B cell (primary cell): ENCODE measurements at regions of chr10 and their contacts with region 1.

Region 1: DNA sequence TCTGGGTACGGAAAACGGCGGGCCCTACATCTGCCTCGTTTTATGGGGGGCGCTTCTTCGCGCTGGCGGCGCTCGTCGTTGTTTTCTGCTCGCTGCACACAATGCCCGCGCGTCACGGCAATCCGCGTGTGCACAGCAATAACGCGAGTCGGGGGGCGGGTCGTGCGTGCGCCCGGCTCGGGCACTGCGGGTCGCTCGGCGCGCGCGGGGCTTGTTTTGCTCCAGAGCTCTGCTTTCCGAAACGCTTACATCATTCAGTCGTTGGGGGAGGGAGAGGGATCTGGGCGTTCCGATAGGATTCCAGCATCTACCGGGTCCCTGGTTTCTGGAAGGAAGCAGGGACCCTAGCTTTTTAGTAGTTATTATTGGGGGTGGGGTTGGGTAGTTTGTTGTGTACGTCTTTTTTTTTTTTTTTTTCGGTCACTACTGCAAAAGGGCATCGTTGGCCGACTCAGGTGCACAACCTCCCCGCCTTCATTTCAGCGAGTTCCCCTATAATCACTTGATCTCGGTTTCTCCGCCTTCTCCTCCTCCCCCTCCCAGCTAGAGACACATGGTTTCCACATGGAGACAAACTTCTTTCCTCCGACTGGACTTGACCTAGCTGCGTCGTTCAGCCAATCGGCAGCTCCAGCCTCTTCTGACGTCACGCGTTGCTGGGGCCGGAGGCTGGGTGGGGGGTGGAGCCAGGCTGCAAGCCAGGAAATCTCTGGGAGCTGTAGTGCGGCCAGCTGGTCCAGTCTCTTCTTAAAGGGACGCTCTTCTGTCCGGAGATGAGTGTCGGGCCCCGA is 3.5 kb downstream of the MXI1 start:
- DNase-seq: peak; percentile 94
- ATAC-seq: peak; percentile 68
- H3K4me3 ChIP-seq: peak overlapping the region; percentile 67 to 90 (median 82)
- H3K4me3 Mint-ChIP-seq: peak overlapping the region; percentile 88
- H3K27ac ChIP-seq: peak overlapping the region; percentile 82 to 85
- H3K27ac Mint-ChIP-seq: peak overlapping the region; percentile 97
- H3K4me1 ChIP-seq: peaks cover 44 to 67% of the 10 kb centered on the region in 2 donors
- H3K4me1 Mint-ChIP-seq: peaks cover 58% of the 10 kb centered on the region
- H3K27me3 ChIP-seq: peaks cover 0 to 18% (median 7%) of the 10 kb centered on the region in 4 experiments
- H3K27me3 Mint-ChIP-seq: peaks cover 4% of the 10 kb centered on the region
- CTCF ChIP-seq: no peak

Region 2: DNA sequence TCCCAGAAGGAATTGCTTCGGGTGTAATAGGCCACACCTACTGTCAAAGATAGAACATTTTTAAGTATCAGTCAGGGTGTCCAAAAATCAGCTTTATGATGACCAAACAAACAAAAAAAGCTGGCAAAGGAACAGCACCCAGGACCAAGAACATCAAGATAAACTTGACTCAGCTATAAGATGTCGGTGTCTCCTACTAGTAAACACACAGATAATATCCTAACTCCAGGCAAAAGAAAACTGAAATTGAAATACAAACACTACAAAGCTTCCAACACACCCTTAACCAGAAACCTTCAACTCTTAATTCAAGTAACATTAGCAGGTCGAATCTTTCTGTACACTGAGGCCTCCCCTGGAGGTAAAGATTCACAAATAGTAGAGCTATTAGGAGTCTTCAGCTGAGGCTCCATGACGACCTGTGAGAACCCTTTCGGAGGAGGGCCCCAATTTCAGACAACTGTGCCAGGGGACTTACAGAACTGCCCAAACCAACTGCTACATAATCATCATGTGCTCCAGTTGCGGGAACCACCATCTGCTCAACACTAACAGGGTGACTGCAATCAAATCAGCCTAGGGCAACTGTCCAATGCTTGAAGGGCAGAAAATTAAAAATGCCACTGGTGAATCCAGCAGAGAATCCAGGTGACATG is 307.8 kb before region 1 on chr10:
- CTCF ChIA-PET with region 1: no interaction called
- POLR2A ChIA-PET with region 1: no interaction called
- intact Hi-C with region 1: no loop called
- DNase-seq: no peak
- ATAC-seq: no peak
- H3K4me3 ChIP-seq: no peak overlapping the region
- H3K4me3 Mint-ChIP-seq: peak overlapping the region; percentile 6
- H3K27ac ChIP-seq: no peak overlapping the region
- H3K27ac Mint-ChIP-seq: no peak overlapping the region
- H3K4me1 ChIP-seq: peaks cover 4% of the 10 kb centered on the region in 2 donors
- H3K4me1 Mint-ChIP-seq: peaks cover 20% of the 10 kb centered on the region
- H3K27me3 ChIP-seq: no peaks in the 10 kb centered on the region
- H3K27me3 Mint-ChIP-seq: no peaks in the 10 kb centered on the region
- CTCF ChIP-seq: no peak

Region 3: DNA sequence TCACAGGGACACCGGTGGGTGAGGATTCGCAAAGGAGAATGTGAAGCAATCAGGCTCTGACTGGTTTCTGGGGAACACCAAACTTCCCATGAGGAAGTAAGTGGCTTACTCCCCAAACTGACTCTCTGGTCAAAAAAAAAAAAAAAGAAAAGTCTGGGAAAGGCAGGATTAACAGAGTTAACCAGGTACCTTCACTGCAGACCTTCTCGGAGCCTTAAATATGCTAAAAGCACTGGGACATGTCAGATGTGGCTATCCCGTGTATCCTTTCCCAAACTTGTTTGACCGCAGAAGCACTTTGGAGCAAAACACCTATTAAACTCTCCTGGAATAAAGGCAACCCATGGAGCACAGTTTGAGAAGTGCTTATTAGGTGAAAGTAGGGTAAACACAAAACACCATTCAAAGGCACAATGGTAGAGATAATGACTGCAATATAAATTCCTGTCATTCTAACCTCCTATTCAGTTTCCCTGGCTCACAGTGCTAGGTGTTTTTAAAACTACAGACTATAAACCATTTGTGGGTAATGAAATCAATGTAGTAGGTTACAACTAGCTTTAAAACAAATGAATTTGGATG is 47.6 kb before region 1 on chr10:
- CTCF ChIA-PET with region 1: interaction called, 4 read pairs
- POLR2A ChIA-PET with region 1: interaction called, 3 read pairs
- intact Hi-C with region 1: loop called (anchors 5 kb)
- DNase-seq: no peak
- ATAC-seq: no peak
- H3K4me3 ChIP-seq: no peak overlapping the region
- H3K4me3 Mint-ChIP-seq: no peak overlapping the region
- H3K27ac ChIP-seq: no peak overlapping the region
- H3K27ac Mint-ChIP-seq: no peak overlapping the region
- H3K4me1 ChIP-seq: peaks cover 5 to 14% of the 10 kb centered on the region in 2 donors
- H3K4me1 Mint-ChIP-seq: peaks cover 11% of the 10 kb centered on the region
- H3K27me3 ChIP-seq: peaks cover 1 to 59% (median 25%) of the 10 kb centered on the region in 4 experiments
- H3K27me3 Mint-ChIP-seq: peaks cover 41% of the 10 kb centered on the region
- CTCF ChIP-seq: no peak

Region 4: DNA sequence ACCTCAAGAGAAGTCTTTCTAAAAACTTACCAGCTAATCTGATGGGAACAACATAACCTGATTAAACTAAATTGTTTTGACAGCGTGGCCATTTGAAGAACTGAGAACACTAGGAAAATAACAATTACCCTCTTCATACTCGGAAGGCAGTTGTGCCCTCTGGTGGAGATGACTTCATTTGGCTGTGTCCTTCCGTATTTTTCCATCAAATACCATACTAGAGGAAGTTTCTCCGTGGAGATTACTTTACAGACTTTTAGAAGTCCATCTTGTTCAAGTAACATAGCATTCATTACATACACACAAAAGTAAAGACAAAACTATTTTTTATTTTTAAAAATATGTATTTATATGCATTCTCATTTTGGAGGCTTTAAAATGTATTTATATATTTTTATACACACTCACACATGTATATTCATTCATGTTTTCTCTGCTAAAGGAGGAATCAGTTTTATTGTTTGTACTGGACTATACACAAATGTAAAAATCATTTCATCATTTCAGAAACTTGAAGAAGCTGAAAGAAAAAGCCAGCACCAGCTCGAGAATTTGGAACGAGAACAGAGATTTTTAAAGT is 68.6 kb after region 1 on chr10:
- CTCF ChIA-PET with region 1: interaction called, 45 read pairs
- POLR2A ChIA-PET with region 1: interaction called, 3 read pairs
- intact Hi-C with region 1: loop called (anchors 2 kb)
- DNase-seq: peak; percentile 79
- ATAC-seq: peak; percentile 68
- H3K4me3 ChIP-seq: peak overlapping the region in 1 of 5 experiments; percentile 38
- H3K4me3 Mint-ChIP-seq: peak overlapping the region; percentile 26
- H3K27ac ChIP-seq: no peak overlapping the region
- H3K27ac Mint-ChIP-seq: no peak overlapping the region
- H3K4me1 ChIP-seq: peaks cover 11 to 17% of the 10 kb centered on the region in 2 donors
- H3K4me1 Mint-ChIP-seq: peaks cover 21% of the 10 kb centered on the region
- H3K27me3 ChIP-seq: no peaks in the 10 kb centered on the region
- H3K27me3 Mint-ChIP-seq: no peaks in the 10 kb centered on the region
- CTCF ChIP-seq: peak; percentile 84

Region 5: GRCh38 chr10:110344622-110345021 is 133.8 kb after region 1 on chr10:
- CTCF ChIA-PET with region 1: no interaction called
- POLR2A ChIA-PET with region 1: interaction called, 10 read pairs
- intact Hi-C with region 1: no loop called
- DNase-seq: no peak
- ATAC-seq: no peak
- H3K4me3 ChIP-seq: no peak overlapping the region
- H3K4me3 Mint-ChIP-seq: no peak overlapping the region
- H3K27ac ChIP-seq: no peak overlapping the region
- H3K27ac Mint-ChIP-seq: no peak overlapping the region
- H3K4me1 ChIP-seq: no peaks in the 10 kb centered on the region
- H3K4me1 Mint-ChIP-seq: peaks cover 8% of the 10 kb centered on the region
- H3K27me3 ChIP-seq: peaks cover 0 to 5% (median 1%) of the 10 kb centered on the region in 4 experiments
- H3K27me3 Mint-ChIP-seq: peaks cover 30% of the 10 kb centered on the region
- CTCF ChIP-seq: no peak

Region 6: DNA sequence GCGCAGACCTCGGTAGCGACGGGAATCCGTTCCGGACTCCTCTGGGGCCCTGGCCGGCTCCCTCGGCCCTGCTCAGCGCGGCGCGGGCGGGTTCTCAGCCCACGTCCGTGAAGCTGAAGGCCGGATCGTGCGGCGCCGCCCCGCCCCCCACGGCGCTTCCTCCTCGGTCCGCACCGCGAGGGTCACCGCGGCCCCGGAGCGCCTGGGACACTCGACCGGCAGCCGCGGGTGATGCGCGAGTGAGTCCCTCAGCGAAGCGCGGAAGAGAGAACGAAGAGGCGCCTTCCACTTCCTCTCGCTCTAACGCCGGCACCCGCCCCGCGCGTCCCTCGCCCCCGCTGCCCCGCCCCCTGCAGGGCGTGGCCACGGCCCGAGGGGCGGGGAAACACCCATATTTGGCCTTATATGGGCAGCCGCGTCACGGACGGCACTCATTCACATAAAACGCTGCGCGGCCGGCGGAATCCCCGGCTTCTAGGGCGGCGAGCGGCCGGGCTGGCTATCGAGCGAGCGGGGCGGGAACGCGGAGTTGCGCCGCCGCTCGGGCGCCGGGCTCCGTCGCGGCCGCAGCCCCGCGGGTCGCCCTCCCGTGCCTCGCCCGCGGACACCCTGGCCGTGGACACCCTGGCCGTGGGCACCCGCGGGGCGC is 286.7 kb after region 1 on chr10 and contains the start of gene DUSP5:
- CTCF ChIA-PET with region 1: no interaction called
- POLR2A ChIA-PET with region 1: no interaction called
- intact Hi-C with region 1: loop called (anchors 2 kb)
- DNase-seq: peak; percentile 99
- ATAC-seq: peak; percentile 91
- H3K4me3 ChIP-seq: peak within 1 kb of the TSS in 4 of 5 experiments; percentile 57 to 71 (median 62)
- H3K4me3 Mint-ChIP-seq: peak within 1 kb of the TSS; percentile 93
- H3K27ac ChIP-seq: peak within 1 kb of the TSS; percentile 65 to 80
- H3K27ac Mint-ChIP-seq: peak within 1 kb of the TSS; percentile 93
- H3K4me1 ChIP-seq: peaks cover 35 to 51% of the 10 kb centered on the region in 2 donors
- H3K4me1 Mint-ChIP-seq: peaks cover 56% of the 10 kb centered on the region
- H3K27me3 ChIP-seq: peaks cover 0 to 14% (median 2%) of the 10 kb centered on the region in 4 experiments
- H3K27me3 Mint-ChIP-seq: peaks cover 6% of the 10 kb centered on the region
- CTCF ChIP-seq: no peak
- total RNA-seq, gene DUSP5: 10.0 and 10.8 TPM in 2 replicates